ENCODE measurements at regions of chr18 and their contacts with region 1.

Region 1: GRCh38 chr18:67104700-67105284 is 411.7 kb downstream of the DSEL start:
- DNase-seq: peak; percentile 32
- H3K4me3 ChIP-seq: no peak overlapping the region
- H3K27ac ChIP-seq: no peak overlapping the region
- H3K27me3 ChIP-seq: no peaks in the 10 kb centered on the region
- CTCF ChIP-seq: peak; percentile 86

Region 2: DNA sequence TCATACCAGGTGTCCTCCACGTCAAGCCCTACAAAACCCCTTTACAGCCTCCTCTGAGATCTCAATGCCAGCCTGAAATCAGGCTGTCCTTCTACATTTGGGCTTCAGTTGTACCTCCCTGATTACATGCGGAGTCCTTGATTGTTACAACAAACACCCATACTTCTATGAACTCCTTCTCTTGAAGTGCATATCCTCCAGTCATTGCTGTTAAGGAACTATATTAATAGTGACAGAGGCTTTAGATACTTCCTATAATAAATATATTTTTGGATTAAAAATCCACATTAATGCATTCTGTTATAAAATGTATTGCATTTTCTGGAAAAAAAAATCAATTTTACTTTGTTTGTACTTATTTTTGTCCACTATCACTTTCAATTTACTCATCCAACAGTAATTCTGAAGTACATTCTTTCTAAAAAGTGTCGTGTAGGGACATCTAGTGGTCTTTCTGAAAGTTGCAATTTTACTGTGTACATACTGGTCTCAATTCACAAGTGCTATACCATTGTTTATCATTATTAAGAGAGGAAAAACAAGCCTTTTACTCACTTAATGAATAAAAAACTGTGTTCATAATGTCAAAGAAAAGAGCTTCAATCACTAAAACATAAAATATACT is 95.3 kb after region 1 on chr18:
- CTCF ChIA-PET with region 1: interaction called, 156 read pairs
- POLR2A ChIA-PET with region 1: no interaction called
- DNase-seq: peak; percentile 39
- H3K4me3 ChIP-seq: no peak overlapping the region
- H3K27ac ChIP-seq: no peak overlapping the region
- H3K27me3 ChIP-seq: no peaks in the 10 kb centered on the region
- CTCF ChIP-seq: peak; percentile 71

Region 3: DNA sequence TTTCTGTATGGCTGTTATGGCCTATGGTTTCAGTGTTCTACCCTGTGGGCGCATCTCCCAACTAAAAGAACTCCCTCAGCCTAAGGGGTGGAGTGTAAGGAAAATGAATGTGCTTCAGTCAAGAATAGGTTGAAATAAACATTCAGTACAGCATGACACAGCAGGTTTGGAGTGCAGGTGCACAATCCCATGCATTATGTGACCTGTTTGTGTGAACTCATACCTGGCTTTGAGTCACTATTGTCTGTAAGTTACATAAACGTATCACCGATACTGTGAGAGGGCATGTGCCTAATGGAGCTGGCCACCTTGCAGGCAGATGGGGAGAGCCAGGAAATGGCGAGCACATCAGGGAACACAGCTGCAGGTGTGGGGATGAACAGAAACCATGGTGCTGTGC is 195.7 kb after region 1 on chr18:
- CTCF ChIA-PET with region 1: no interaction called
- POLR2A ChIA-PET with region 1: no interaction called
- DNase-seq: no peak
- H3K4me3 ChIP-seq: no peak overlapping the region
- H3K27ac ChIP-seq: no peak overlapping the region
- H3K27me3 ChIP-seq: no peaks in the 10 kb centered on the region
- CTCF ChIP-seq: no peak

Measured in AG04450 (cell line).